ENCODE measurements at regions of chr11 and their contacts with region 1.

Region 1: GRCh38 chr11:11472106-11472505 is 119.1 kb upstream of the CSNK2A3 start:
- DNase-seq: no peak
- H3K4me3 ChIP-seq: no peak overlapping the region
- H3K27ac ChIP-seq: no peak overlapping the region
- H3K4me1 ChIP-seq: peaks cover 3 to 12% of the 10 kb centered on the region in 2 donors
- H3K27me3 ChIP-seq: no peaks in the 10 kb centered on the region
- CTCF ChIP-seq: no peak

Region 2: DNA sequence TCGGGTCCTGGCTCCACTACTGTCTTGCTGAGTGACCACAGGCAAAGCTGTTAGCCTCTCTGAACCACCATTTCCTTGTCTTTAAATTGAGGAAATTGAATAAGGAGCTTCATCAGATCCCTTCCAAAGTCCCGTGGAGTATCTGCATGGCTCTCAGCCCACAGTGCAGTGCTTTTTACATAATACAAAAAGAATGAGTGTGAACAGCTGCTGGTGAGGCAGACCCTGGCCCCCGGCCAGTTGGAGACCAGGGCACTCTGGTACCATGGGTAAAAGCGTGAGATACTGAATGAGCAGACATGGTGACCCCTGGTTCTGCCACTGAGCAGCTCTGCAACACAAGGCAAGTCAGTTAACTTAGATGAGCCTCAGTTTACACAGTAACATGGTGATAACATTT is 62.9 kb after region 1 on chr11:
- intact Hi-C with region 1: loop called (anchors 5 kb)
- DNase-seq: peak in 1 of 2 donors; percentile 75
- H3K4me3 ChIP-seq: no peak overlapping the region
- H3K27ac ChIP-seq: no peak overlapping the region
- H3K4me1 ChIP-seq: peaks cover 12 to 60% of the 10 kb centered on the region in 2 donors
- H3K27me3 ChIP-seq: no peaks in the 10 kb centered on the region
- CTCF ChIP-seq: no peak

Measured in ascending aorta (tissue), 2 donors.